ENCODE measurements at regions of chr21 and their contacts with region 1.

Region 1: GRCh38 chr21:33348706-33349105 is 23.9 kb downstream of the IFNAR1 start:
- DNase-seq: no peak
- ATAC-seq: no peak
- H3K4me3 Mint-ChIP-seq: no peak overlapping the region
- H3K27ac Mint-ChIP-seq: no peak overlapping the region
- H3K4me1 Mint-ChIP-seq: peaks cover 10% of the 10 kb centered on the region
- H3K27me3 Mint-ChIP-seq: no peaks in the 10 kb centered on the region
- CTCF ChIP-seq: no peak

Region 2: DNA sequence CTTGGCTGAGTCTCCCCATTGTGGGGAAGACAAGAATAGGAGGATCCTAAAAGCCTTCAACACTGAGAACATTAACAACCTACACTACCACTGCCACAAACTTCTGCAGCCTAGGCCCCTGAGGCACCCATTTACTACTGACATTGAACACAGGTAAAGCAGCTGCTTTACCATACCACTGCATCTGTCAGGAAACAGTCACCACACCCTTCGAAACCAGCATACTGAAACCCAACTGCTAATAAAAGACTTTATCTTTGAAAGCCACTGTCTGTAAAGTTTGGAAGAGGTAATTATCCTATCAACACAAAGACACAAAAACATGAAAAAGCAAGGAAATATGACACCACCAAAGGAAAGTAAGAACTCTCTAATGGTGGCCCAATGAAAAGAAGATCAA is 16.6 kb before region 1 on chr21:
- CTCF ChIA-PET with region 1: interaction called, 16 read pairs
- POLR2A ChIA-PET with region 1: no interaction called
- intact Hi-C with region 1: no loop called
- DNase-seq: no peak
- ATAC-seq: peak; percentile 51
- H3K4me3 Mint-ChIP-seq: no peak overlapping the region
- H3K27ac Mint-ChIP-seq: peak overlapping the region; percentile 14
- H3K4me1 Mint-ChIP-seq: peaks cover 56% of the 10 kb centered on the region
- H3K27me3 Mint-ChIP-seq: no peaks in the 10 kb centered on the region
- CTCF ChIP-seq: no peak

Region 3: DNA sequence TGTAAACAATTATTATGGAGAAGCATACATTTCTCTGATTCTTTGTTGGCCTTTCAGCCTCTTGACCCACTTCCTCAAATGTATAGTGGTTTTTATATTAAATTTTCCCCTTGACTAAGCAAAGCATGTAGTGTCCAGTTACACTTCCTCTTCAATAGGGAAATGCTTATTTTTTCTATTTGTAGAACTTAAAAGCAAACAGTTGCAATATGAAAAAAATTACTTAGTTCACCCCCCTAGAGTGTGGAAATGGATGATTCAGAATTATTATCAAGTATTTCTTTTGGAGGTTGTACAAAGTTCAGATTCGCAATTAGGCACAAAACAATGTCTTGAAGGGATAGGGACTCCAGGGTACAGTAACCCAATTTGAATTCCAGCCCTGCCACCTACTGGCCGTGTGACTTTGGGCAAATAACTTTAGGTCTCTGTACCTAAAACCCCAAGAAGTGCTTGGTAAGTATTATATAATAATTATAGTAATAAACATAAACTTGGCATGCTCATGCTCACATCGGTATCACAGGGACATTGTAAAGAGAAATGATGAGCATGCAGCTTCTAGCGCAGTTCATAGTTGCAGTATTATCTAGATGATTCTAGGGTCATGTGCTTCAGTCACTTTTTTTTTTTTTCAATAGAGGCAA is 25.9 kb after region 1 on chr21:
- CTCF ChIA-PET with region 1: no interaction called
- POLR2A ChIA-PET with region 1: no interaction called
- intact Hi-C with region 1: no loop called
- DNase-seq: peak; percentile 79
- ATAC-seq: peak; percentile 81
- H3K4me3 Mint-ChIP-seq: no peak overlapping the region
- H3K27ac Mint-ChIP-seq: no peak overlapping the region
- H3K4me1 Mint-ChIP-seq: peaks cover 12% of the 10 kb centered on the region
- H3K27me3 Mint-ChIP-seq: no peaks in the 10 kb centered on the region
- CTCF ChIP-seq: peak; percentile 71

Region 4: DNA sequence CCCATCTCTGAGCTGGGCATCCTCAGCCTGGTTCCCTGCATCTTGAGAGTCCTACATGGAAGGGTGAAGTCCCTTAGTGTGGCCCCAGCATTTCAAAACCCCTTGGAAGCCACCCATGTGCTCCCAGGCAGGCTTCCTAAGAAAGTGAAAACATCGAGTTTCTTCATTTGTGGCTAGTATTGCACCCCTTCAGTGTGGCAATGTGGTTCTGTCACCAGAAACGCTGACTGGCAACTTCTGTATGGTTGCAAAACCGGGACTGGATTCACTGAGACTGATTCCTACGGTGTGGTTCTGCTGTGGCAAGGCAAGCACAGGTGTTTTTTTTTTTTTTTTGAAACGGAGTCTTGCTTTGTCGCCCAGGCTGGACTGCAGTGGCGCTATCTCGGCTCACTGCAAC is 45.6 kb after region 1 on chr21:
- CTCF ChIA-PET with region 1: no interaction called
- POLR2A ChIA-PET with region 1: no interaction called
- intact Hi-C with region 1: no loop called
- DNase-seq: no peak
- ATAC-seq: peak; percentile 13
- H3K4me3 Mint-ChIP-seq: no peak overlapping the region
- H3K27ac Mint-ChIP-seq: no peak overlapping the region
- H3K4me1 Mint-ChIP-seq: no peaks in the 10 kb centered on the region
- H3K27me3 Mint-ChIP-seq: peaks cover 20% of the 10 kb centered on the region
- CTCF ChIP-seq: no peak